Mammary epithelial cell (primary cell): ENCODE measurements at regions of chr6 and their contacts with region 1.

Region 1: DNA sequence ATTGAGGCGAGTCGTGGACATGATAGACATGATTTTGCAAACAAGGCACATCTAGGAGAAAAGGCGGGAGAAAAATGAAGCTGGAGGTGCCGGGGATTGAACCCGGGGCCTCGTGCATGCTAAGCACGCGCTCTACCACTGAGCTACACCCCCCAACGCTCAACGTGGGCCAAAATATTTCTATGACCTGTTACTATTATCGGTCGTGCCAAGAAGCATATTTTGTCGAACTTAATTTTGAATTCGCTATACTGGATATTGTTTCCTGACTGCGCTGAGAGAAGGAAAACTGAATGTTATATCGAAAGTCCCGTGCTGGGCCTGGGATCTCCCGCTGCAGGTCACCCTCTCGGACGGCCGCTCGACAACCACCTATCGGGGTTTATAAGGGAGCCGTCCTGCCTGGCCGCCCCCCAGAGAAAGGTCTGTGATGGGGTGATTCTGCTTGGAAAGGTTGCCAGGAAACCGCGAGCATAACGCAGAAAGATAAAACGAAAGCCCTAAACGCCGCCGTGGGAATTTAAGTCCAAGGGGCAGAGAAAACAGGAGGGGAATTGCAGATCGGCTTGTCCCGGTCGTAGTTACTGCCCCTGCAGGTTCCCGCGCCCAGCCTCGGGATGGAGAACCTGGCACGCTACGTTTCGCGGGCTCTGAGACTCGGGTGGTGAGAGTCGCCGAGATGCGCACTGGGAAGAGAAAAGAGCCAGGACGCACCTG is 60.0 kb downstream of the TRIM27 start:
- DNase-seq: peak; percentile 76
- H3K4me3 ChIP-seq: peak overlapping the region; percentile 57 to 85 (median 69)
- H3K27ac ChIP-seq: peak overlapping the region; percentile 50
- H3K4me1 ChIP-seq: peaks cover 12% of the 10 kb centered on the region
- H3K27me3 ChIP-seq: no peaks in the 10 kb centered on the region
- CTCF ChIP-seq: no peak

Region 2: GRCh38 chr6:28769626-28770402 is 93.9 kb before region 1 on chr6:
- CTCF ChIA-PET with region 1: no interaction called
- dilution Hi-C with region 1: no loop called
- in situ Hi-C with region 1: no loop called
- intact Hi-C with region 1: no loop called
- DNase-seq: peak; percentile 72
- H3K4me3 ChIP-seq: no peak overlapping the region
- H3K27ac ChIP-seq: no peak overlapping the region
- H3K4me1 ChIP-seq: no peaks in the 10 kb centered on the region
- H3K27me3 ChIP-seq: peaks cover 60% of the 10 kb centered on the region
- CTCF ChIP-seq: peak; percentile 31 to 60

Region 3: GRCh38 chr6:28880894-28881780 is 17.4 kb after region 1 on chr6:
- CTCF ChIA-PET with region 1: no interaction called
- dilution Hi-C with region 1: no loop called
- in situ Hi-C with region 1: no loop called
- intact Hi-C with region 1: loop called (anchors 1 kb)
- DNase-seq: peak; percentile 58
- H3K4me3 ChIP-seq: peak overlapping the region; percentile 62 to 65 (median 65)
- H3K27ac ChIP-seq: no peak overlapping the region
- H3K4me1 ChIP-seq: no peaks in the 10 kb centered on the region
- H3K27me3 ChIP-seq: no peaks in the 10 kb centered on the region
- CTCF ChIP-seq: no peak

Region 4: GRCh38 chr6:28923318-28924102 is 59.7 kb after region 1 on chr6 and contains the start of gene TRIM27:
- CTCF ChIA-PET with region 1: no interaction called
- dilution Hi-C with region 1: no loop called
- in situ Hi-C with region 1: no loop called
- intact Hi-C with region 1: loop called (anchors 1 kb)
- DNase-seq: peak; percentile 81
- H3K4me3 ChIP-seq: peak within 1 kb of the TSS; percentile 67 to 88 (median 73)
- H3K27ac ChIP-seq: peak within 1 kb of the TSS; percentile 82
- H3K4me1 ChIP-seq: peaks cover 19% of the 10 kb centered on the region
- H3K27me3 ChIP-seq: no peaks in the 10 kb centered on the region
- CTCF ChIP-seq: peak in 1 of 2 donors; percentile 2
- total RNA-seq, gene TRIM27: 45.3 to 49.2 TPM